Activated B cell treated with CpG ODN at 0.5 μM for 24 hours (primary cell): ENCODE measurements at regions of chr19 and their contacts with region 1.

Region 1: GRCh38 chr19:39445265-39446111 is at the start of gene SUPT5H:
- DNase-seq: peak; percentile 84
- ATAC-seq: peak; percentile 94
- H3K4me3 Mint-ChIP-seq: peak within 1 kb of the TSS; percentile 96
- H3K27ac Mint-ChIP-seq: peak within 1 kb of the TSS; percentile 93
- H3K4me1 Mint-ChIP-seq: peaks cover 62% of the 10 kb centered on the region
- H3K27me3 Mint-ChIP-seq: no peaks in the 10 kb centered on the region
- CTCF ChIP-seq: no peak
- total RNA-seq, gene SUPT5H: 184 and 200 TPM in 2 replicates

Region 2: GRCh38 chr19:38315657-38316476 is 1129.6 kb before region 1 on chr19 and contains the start of gene YIF1B:
- CTCF ChIA-PET with region 1: no interaction called
- POLR2A ChIA-PET with region 1: no interaction called
- intact Hi-C with region 1: loop called (anchors 10 kb)
- DNase-seq: peak; percentile 89
- ATAC-seq: peak; percentile 92
- H3K4me3 Mint-ChIP-seq: peak within 1 kb of the TSS; percentile 85
- H3K27ac Mint-ChIP-seq: peak within 1 kb of the TSS; percentile 94
- H3K4me1 Mint-ChIP-seq: peaks cover 49% of the 10 kb centered on the region
- H3K27me3 Mint-ChIP-seq: no peaks in the 10 kb centered on the region
- CTCF ChIP-seq: no peak
- total RNA-seq, gene YIF1B: 28.7 and 30.1 TPM in 2 replicates

Region 3: DNA sequence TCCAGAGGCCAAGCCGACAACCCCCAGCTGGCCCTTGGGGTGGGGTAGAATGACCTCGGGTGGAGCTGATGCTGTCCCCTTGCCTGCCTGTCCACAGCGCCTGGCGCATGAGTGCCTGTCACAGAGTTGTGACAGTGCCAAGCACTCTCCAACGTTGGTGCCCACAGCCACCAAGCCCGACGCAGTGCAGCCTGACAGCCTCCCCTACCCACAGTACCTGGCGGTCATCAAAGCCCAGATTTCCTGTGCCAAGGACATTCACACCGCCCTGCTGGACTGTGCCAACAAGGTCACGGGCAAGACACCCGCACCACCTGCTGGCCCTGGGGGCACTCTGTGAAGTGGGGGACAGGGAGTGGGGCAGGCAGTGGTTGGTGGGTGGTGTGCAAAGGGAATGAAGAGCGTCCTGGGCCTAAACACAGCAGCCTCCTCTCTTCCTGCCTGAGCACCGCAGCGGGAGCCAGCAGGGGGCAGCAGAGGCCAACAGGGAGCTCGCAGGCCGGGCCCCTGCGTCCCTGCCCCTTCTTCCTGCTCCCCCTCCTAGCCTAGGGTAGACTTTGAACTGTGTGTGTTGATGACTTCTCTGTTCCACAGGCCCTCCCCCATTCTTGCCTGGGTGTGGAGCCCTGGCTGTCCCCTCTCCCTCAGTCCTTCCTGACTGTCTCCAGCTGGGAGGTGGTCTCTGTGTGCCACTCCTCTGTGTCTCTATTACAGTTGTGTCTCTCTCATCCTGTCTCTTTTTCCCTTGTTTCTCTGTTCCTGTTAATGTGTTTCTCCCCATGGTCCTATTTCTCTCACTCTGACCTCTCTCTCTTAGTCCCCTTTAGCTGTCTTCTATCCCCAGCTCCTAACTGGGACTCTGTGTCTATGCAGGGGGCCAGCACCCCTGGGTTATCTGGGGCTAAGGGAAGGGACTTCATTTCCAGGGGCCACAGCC is 47.9 kb before region 1 on chr19:
- CTCF ChIA-PET with region 1: no interaction called
- POLR2A ChIA-PET with region 1: interaction called, 11 read pairs
- intact Hi-C with region 1: no loop called
- DNase-seq: peak; percentile 91
- ATAC-seq: peak; percentile 59
- H3K4me3 Mint-ChIP-seq: peak overlapping the region; percentile 67
- H3K27ac Mint-ChIP-seq: peak overlapping the region; percentile 91
- H3K4me1 Mint-ChIP-seq: peaks cover 62% of the 10 kb centered on the region
- H3K27me3 Mint-ChIP-seq: no peaks in the 10 kb centered on the region
- CTCF ChIP-seq: peak; percentile 84

Region 4: GRCh38 chr19:39480337-39481228 is 35.1 kb after region 1 on chr19 and contains the start of gene TIMM50:
- CTCF ChIA-PET with region 1: no interaction called
- POLR2A ChIA-PET with region 1: interaction called, 7 read pairs
- intact Hi-C with region 1: loop called (anchors 1 kb)
- DNase-seq: peak; percentile 98
- ATAC-seq: peak; percentile 99
- H3K4me3 Mint-ChIP-seq: peak within 1 kb of the TSS; percentile 91
- H3K27ac Mint-ChIP-seq: peak within 1 kb of the TSS; percentile 85
- H3K4me1 Mint-ChIP-seq: peaks cover 25% of the 10 kb centered on the region
- H3K27me3 Mint-ChIP-seq: no peaks in the 10 kb centered on the region
- CTCF ChIP-seq: no peak
- total RNA-seq, gene TIMM50: 63.8 and 68.9 TPM in 2 replicates

Region 5: GRCh38 chr19:39532233-39533002 is 86.9 kb after region 1 on chr19 and contains the start of gene EID2B:
- CTCF ChIA-PET with region 1: interaction called, 20 read pairs
- POLR2A ChIA-PET with region 1: interaction called, 5 read pairs
- intact Hi-C with region 1: loop called (anchors 1 kb)
- DNase-seq: peak; percentile 88
- ATAC-seq: peak; percentile 99
- H3K4me3 Mint-ChIP-seq: peak within 1 kb of the TSS; percentile 95
- H3K27ac Mint-ChIP-seq: peak within 1 kb of the TSS; percentile 86
- H3K4me1 Mint-ChIP-seq: peaks cover 18% of the 10 kb centered on the region
- H3K27me3 Mint-ChIP-seq: no peaks in the 10 kb centered on the region
- CTCF ChIP-seq: peak; percentile 96
- total RNA-seq, gene EID2B: 3.3 and 4.0 TPM in 2 replicates

Region 6: DNA sequence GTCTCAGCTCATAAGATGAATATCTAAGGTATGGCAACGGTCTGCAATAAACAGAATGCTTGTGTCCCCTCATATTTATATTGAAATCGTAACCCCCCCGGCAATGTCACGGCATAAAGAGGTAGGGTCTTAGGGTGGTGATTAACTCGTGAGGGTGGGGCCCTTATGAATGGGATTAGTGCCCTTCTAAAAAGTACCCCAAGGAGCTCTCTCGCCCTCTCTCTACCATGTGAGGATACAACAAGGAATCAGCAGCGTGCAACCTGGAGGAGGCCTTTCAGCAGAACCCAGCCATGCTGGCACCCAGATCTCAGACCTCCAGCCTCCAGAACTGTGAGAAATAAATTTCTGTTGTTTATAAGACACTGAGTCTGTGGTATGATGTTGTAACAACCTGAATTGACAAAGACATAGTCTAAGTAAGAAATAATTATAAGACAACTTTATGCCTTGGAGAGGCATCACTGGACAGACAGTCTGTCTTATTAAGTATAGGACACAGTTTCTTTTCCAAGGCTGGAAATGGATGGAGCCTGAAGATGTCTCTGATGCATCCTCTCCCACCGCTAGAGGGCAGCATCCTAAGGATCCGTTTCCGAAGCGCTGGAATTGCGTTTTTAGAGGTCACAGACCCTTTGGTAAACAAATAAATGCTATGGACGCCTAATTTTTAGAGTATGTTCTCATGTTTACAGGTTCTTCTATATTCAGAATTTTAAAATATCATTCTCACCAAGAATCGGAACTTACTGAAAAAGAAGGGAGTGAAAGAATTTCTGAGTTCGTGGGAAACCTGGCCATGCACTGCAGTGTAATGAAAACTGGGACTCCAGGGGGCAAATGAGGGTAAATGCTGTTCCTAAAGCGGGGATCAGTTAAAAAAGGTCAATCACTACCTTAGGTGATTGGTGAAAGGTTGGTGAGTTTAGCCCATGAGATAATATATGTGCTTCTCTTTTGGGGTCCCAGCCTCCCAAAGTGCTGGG is 319.9 kb after region 1 on chr19:
- CTCF ChIA-PET with region 1: no interaction called
- POLR2A ChIA-PET with region 1: no interaction called
- intact Hi-C with region 1: loop called (anchors 5 kb)
- DNase-seq: no peak
- ATAC-seq: no peak
- H3K4me3 Mint-ChIP-seq: no peak overlapping the region
- H3K27ac Mint-ChIP-seq: no peak overlapping the region
- H3K4me1 Mint-ChIP-seq: no peaks in the 10 kb centered on the region
- H3K27me3 Mint-ChIP-seq: peaks cover 10% of the 10 kb centered on the region
- CTCF ChIP-seq: peak; percentile 37

Region 7: DNA sequence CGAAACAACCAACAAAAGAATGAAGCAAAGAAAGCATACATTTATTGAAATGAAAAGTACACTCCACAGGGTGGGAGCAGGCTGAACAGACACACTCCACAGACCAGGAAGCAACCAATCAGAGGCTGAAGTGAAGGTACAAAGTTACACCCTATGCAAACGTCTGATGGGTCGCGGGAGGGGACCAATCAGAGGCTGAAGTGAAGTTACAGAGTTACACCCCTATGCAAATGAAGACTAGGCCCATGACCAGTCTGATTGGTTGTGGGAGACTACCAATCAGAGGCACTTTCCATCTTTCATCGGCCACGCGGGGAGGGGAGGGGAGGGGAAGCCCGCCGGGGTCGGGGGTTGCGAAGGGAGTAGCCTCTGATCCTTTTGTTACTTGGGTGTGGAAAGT is 413.1 kb after region 1 on chr19:
- CTCF ChIA-PET with region 1: no interaction called
- POLR2A ChIA-PET with region 1: no interaction called
- intact Hi-C with region 1: no loop called
- DNase-seq: no peak
- ATAC-seq: no peak
- H3K4me3 Mint-ChIP-seq: no peak overlapping the region
- H3K27ac Mint-ChIP-seq: no peak overlapping the region
- H3K4me1 Mint-ChIP-seq: no peaks in the 10 kb centered on the region
- H3K27me3 Mint-ChIP-seq: peaks cover 16% of the 10 kb centered on the region
- CTCF ChIP-seq: no peak

Region 8: DNA sequence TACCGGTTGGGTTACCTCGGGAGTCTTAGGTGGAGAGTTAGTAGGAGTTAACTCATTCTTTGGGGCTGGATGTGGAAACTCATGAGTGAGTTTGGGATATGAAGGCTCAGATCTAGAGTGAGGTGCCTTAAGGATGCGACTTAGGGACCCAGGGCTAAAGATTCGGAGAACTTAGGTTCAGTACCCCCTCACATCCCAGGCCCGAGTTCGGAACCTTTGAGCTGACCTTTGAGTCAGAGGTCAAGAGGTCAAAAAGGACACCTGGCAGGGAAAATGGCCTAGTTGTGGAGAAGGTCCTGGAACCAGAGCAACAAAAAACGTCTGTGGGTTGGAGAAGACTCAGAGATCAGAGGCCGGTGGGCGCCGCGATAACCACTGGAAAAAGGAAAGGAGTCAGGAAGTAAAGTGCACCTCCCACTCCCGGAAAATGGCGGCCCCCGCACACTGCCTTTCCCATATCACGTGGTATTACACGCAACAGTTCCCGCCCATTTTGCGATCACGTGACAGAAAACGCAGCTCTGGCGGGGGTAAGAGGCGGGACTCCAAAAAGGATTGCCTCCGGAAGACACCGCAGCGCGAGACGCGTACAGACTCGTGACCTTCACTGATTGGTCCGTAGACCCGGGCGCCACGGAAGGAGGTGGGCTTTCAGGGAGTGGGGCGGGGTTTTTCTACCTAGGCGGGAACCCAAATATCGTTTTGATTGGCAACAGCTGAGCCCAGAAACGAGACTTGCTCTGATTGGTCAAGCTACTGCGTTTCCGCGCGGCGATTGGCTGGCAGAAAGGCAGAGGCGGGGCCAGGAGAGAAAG is 1304.8 kb after region 1 on chr19 and contains the start of gene ACTMAP:
- CTCF ChIA-PET with region 1: no interaction called
- POLR2A ChIA-PET with region 1: no interaction called
- intact Hi-C with region 1: loop called (anchors 2 kb)
- DNase-seq: peak; percentile 97
- ATAC-seq: peak; percentile 88
- H3K4me3 Mint-ChIP-seq: peak within 1 kb of the TSS; percentile 97
- H3K27ac Mint-ChIP-seq: peak within 1 kb of the TSS; percentile 96
- H3K4me1 Mint-ChIP-seq: peaks cover 49% of the 10 kb centered on the region
- H3K27me3 Mint-ChIP-seq: no peaks in the 10 kb centered on the region
- CTCF ChIP-seq: no peak
- total RNA-seq, gene ACTMAP: 8.5 and 12.7 TPM in 2 replicates